Upper lobe of right lung (tissue), 1 donor: ENCODE measurements at regions of chr7 and their contacts with region 1.

Region 1: GRCh38 chr7:23712368-23713284 is 2.6 kb downstream of the STK31 start:
- DNase-seq: no peak
- ATAC-seq: peak; percentile 71
- H3K4me3 ChIP-seq: no peak overlapping the region
- H3K27ac ChIP-seq: no peak overlapping the region
- H3K4me1 ChIP-seq: no peaks in the 10 kb centered on the region
- H3K27me3 ChIP-seq: no peaks in the 10 kb centered on the region
- CTCF ChIP-seq: peak; percentile 65

Region 2: DNA sequence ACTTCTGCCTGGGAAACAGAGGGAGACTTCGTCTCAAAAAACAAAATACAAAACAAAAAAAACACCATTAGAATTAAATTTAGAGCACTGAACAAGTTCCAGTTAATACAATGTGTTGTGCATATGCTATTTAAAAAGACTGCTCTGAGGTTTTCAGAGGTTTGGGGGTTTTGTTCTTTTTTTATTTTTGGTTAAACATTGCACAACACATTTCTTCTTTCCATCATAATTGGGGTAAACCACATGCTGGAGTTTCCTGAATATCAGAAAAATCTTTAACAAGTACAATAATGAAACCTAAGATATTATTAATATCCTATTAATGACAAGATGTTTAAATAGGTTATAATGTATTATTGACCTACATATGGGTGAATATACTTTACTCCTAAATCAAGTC is 268.7 kb before region 1 on chr7:
- intact Hi-C with region 1: no loop called
- DNase-seq: no peak
- ATAC-seq: no peak
- H3K4me3 ChIP-seq: no peak overlapping the region
- H3K27ac ChIP-seq: no peak overlapping the region
- H3K4me1 ChIP-seq: no peaks in the 10 kb centered on the region
- H3K27me3 ChIP-seq: no peaks in the 10 kb centered on the region
- CTCF ChIP-seq: no peak

Region 3: GRCh38 chr7:23570592-23571200 is 141.9 kb before region 1 on chr7:
- intact Hi-C with region 1: loop called (anchors 5 kb)
- DNase-seq: peak; percentile 75
- ATAC-seq: peak; percentile 99
- H3K4me3 ChIP-seq: no peak overlapping the region
- H3K27ac ChIP-seq: no peak overlapping the region
- H3K4me1 ChIP-seq: no peaks in the 10 kb centered on the region
- H3K27me3 ChIP-seq: peaks cover 6% of the 10 kb centered on the region
- CTCF ChIP-seq: peak; percentile 87

Region 4: GRCh38 chr7:23654508-23654907 is 58.1 kb before region 1 on chr7:
- intact Hi-C with region 1: no loop called
- DNase-seq: no peak
- ATAC-seq: peak; percentile 57
- H3K4me3 ChIP-seq: no peak overlapping the region
- H3K27ac ChIP-seq: no peak overlapping the region
- H3K4me1 ChIP-seq: no peaks in the 10 kb centered on the region
- H3K27me3 ChIP-seq: no peaks in the 10 kb centered on the region
- CTCF ChIP-seq: peak; percentile 21

Region 5: GRCh38 chr7:24102988-24103387 is 390.4 kb after region 1 on chr7:
- intact Hi-C with region 1: no loop called
- DNase-seq: no peak
- ATAC-seq: peak; percentile 36
- H3K4me3 ChIP-seq: no peak overlapping the region
- H3K27ac ChIP-seq: no peak overlapping the region
- H3K4me1 ChIP-seq: no peaks in the 10 kb centered on the region
- H3K27me3 ChIP-seq: no peaks in the 10 kb centered on the region
- CTCF ChIP-seq: no peak